OCI-LY7 (cell line): ENCODE measurements at regions of chr3 and their contacts with region 1.

Region 1: DNA sequence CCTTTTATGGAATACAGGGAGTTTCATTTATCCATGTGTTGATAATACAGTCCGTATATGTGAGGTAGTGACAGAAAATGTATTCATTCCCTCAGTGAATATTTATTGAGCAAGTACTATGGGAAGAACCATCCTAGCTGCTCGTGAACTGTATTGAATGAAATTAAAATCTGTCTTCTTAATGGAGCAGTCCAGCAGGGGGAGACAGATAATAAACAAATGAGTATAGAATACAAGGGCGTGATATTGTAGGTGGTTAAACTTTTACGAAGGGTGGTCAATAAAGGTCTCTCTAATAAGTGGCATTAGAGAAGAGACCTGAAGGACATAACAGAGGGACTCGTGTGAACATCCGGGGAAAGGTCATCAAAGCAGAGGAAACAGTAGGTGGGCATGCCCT is 62.7 kb upstream of the OSTN start:
- DNase-seq: peak; percentile 29
- H3K4me3 ChIP-seq: no peak overlapping the region
- H3K27ac ChIP-seq: no peak overlapping the region
- H3K4me1 ChIP-seq: peaks cover 48% of the 10 kb centered on the region
- CTCF ChIP-seq: peak; percentile 71

Region 2: DNA sequence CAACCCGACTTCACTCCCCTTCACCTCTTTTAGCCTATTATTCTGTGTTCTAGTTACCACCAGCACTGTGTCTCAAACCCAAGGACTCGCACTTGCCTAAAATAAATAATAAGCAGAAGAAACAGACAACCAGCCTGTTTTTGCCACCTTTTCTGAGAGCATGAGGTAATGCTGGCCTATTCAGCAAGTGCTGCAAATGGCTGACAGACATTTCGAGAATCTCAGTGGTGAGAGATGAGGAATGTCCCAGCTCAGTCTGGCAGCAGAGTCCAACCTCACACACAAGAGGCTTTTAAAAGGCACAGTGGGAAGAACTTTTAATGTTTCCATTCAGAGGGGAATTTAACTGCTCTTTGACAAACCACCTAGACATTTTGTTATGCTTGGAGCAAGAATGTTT is 130.6 kb before region 1 on chr3:
- CTCF ChIA-PET with region 1: no interaction called
- POLR2A ChIA-PET with region 1: no interaction called
- intact Hi-C with region 1: no loop called
- DNase-seq: no peak
- H3K4me3 ChIP-seq: no peak overlapping the region
- H3K27ac ChIP-seq: no peak overlapping the region
- H3K4me1 ChIP-seq: no peaks in the 10 kb centered on the region
- CTCF ChIP-seq: no peak

Region 3: GRCh38 chr3:191148131-191148530 is 11.8 kb after region 1 on chr3:
- CTCF ChIA-PET with region 1: no interaction called
- POLR2A ChIA-PET with region 1: interaction called, 28 read pairs
- intact Hi-C with region 1: no loop called
- DNase-seq: no peak
- H3K4me3 ChIP-seq: no peak overlapping the region
- H3K27ac ChIP-seq: no peak overlapping the region
- H3K4me1 ChIP-seq: peaks cover 30% of the 10 kb centered on the region
- CTCF ChIP-seq: no peak

Region 4: GRCh38 chr3:191253089-191253799 is 116.9 kb after region 1 on chr3:
- CTCF ChIA-PET with region 1: no interaction called
- POLR2A ChIA-PET with region 1: no interaction called
- intact Hi-C with region 1: loop called (anchors 5 kb)
- DNase-seq: peak; percentile 67
- H3K4me3 ChIP-seq: peak overlapping the region; percentile 40
- H3K27ac ChIP-seq: peak overlapping the region; percentile 57
- H3K4me1 ChIP-seq: peaks cover 69% of the 10 kb centered on the region
- CTCF ChIP-seq: no peak